Naive thymus-derived CD4-positive, alpha-beta T cell (primary cell): ENCODE measurements at regions of chr5 and their contacts with region 1.

Region 1: GRCh38 chr5:35857606-35858205 is 1.0 kb downstream of the IL7R start:
- DNase-seq: peak in 1 of 9 donors; percentile 41
- ATAC-seq: no peak
- H3K4me3 ChIP-seq: peak overlapping the region; percentile 80
- H3K4me3 Mint-ChIP-seq: peak overlapping the region; percentile 82 to 100 (median 94)
- H3K27ac ChIP-seq: peak overlapping the region; percentile 98
- H3K27ac Mint-ChIP-seq: peak overlapping the region; percentile 96 to 100 (median 99)
- H3K4me1 ChIP-seq: peaks cover 40 to 50% of the 10 kb centered on the region in 2 donors
- H3K4me1 Mint-ChIP-seq: peaks cover 25 to 73% (median 63%) of the 10 kb centered on the region in 7 donors
- H3K27me3 ChIP-seq: no peaks in the 10 kb centered on the region
- H3K27me3 Mint-ChIP-seq: no peaks in the 10 kb centered on the region

Region 2: GRCh38 chr5:35656721-35657120 is 201.0 kb before region 1 on chr5:
- CTCF ChIA-PET with region 1: interaction called, 17 read pairs
- POLR2A ChIA-PET with region 1: interaction called, 6 read pairs
- intact Hi-C with region 1: loop called (anchors 1 to 2 kb)
- DNase-seq: no peak
- ATAC-seq: no peak
- H3K4me3 ChIP-seq: no peak overlapping the region
- H3K4me3 Mint-ChIP-seq: no peak overlapping the region
- H3K27ac ChIP-seq: no peak overlapping the region
- H3K27ac Mint-ChIP-seq: peak overlapping the region in 2 of 9 donors; percentile 16 to 45
- H3K4me1 ChIP-seq: peaks cover 0 to 5% of the 10 kb centered on the region in 2 donors
- H3K4me1 Mint-ChIP-seq: peaks cover 7 to 34% (median 19%) of the 10 kb centered on the region in 7 donors
- H3K27me3 ChIP-seq: no peaks in the 10 kb centered on the region
- H3K27me3 Mint-ChIP-seq: no peaks in the 10 kb centered on the region

Region 3: DNA sequence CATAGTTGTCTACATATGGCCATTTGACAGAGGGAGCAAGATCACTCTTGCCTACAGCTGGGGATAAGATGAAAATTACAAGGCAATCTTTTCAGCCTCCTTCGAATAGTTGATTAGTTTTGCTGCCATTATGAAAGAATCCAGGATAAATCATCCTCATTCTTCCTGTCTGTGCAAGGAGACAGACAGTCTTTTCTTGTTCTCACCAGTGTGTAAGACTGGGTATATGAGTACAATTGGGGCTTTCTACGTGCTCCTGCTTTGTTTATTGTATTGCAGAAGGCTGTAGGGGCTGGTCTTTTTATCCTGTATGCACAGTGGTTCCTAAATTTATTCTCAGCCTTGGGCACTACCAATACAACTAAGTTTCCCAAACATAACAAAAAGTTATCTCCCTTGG is 163.2 kb before region 1 on chr5:
- CTCF ChIA-PET with region 1: no interaction called
- POLR2A ChIA-PET with region 1: no interaction called
- intact Hi-C with region 1: no loop called
- DNase-seq: no peak
- ATAC-seq: no peak
- H3K4me3 ChIP-seq: no peak overlapping the region
- H3K4me3 Mint-ChIP-seq: no peak overlapping the region
- H3K27ac ChIP-seq: no peak overlapping the region
- H3K27ac Mint-ChIP-seq: no peak overlapping the region
- H3K4me1 ChIP-seq: no peaks in the 10 kb centered on the region
- H3K4me1 Mint-ChIP-seq: peaks cover 0 to 12% (median 4%) of the 10 kb centered on the region in 7 donors
- H3K27me3 ChIP-seq: no peaks in the 10 kb centered on the region
- H3K27me3 Mint-ChIP-seq: no peaks in the 10 kb centered on the region

Region 4: DNA sequence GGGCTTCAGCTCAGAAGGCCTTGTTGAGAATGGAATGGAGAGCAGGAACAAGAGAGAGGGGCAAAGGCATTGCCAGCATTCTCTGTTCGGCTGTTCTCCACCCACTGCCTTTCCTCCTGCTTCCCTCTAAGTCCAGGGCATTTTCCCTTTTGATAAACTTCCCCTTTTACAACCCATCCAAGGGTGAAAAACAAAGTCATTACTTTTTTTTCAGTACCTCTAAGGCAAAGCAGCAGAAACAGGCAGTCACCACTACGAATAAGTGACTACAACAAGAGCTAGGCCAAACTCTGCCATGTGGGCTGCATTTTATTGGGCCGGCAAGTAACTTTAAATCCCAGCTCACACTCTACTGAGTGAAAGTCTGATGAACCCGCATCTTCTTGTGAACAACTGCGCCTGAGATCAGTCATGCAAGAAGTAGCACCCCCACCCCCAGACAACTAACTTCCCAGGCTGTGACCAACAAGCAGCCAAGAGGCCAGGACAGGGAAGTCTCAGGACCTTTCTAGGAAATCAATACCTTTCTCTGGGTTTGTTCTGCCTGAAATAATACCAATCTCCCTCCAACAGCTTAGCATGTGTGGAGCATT is 12.1 kb after region 1 on chr5:
- CTCF ChIA-PET with region 1: interaction called, 9 read pairs
- POLR2A ChIA-PET with region 1: interaction called, 357 read pairs
- intact Hi-C with region 1: loop called in 1 of 2 experiments (anchors 1 kb)
- DNase-seq: no peak
- ATAC-seq: no peak
- H3K4me3 ChIP-seq: no peak overlapping the region
- H3K4me3 Mint-ChIP-seq: peak overlapping the region in 7 of 10 donors; percentile 44 to 87 (median 51)
- H3K27ac ChIP-seq: peak overlapping the region; percentile 65
- H3K27ac Mint-ChIP-seq: peak overlapping the region; percentile 47 to 97 (median 86)
- H3K4me1 ChIP-seq: peaks cover 41 to 54% of the 10 kb centered on the region in 2 donors
- H3K4me1 Mint-ChIP-seq: peaks cover 46 to 99% (median 93%) of the 10 kb centered on the region in 7 donors
- H3K27me3 ChIP-seq: no peaks in the 10 kb centered on the region
- H3K27me3 Mint-ChIP-seq: no peaks in the 10 kb centered on the region